ENCODE measurements at regions of chr6 and their contacts with region 1.

Region 1: GRCh38 chr6:26031595-26032339 is 55.5 kb upstream of the HFE start:
- DNase-seq: peak; percentile 99
- H3K4me3 ChIP-seq: peak overlapping the region; percentile 78
- H3K27ac ChIP-seq: peak overlapping the region; percentile 99
- H3K4me1 ChIP-seq: peaks cover 74% of the 10 kb centered on the region
- CTCF ChIP-seq: 0 out of 2 replicates have a peak, but pooled peaks have one; percentile 33

Region 2: GRCh38 chr6:25389471-25389870 is 642.3 kb before region 1 on chr6:
- CTCF ChIA-PET with region 1: no interaction called
- POLR2A ChIA-PET with region 1: interaction called, 10 read pairs
- intact Hi-C with region 1: no loop called
- DNase-seq: no peak
- H3K4me3 ChIP-seq: peak overlapping the region; percentile 60
- H3K27ac ChIP-seq: peak overlapping the region; percentile 99
- H3K4me1 ChIP-seq: peaks cover 94% of the 10 kb centered on the region
- CTCF ChIP-seq: no peak

Region 3: DNA sequence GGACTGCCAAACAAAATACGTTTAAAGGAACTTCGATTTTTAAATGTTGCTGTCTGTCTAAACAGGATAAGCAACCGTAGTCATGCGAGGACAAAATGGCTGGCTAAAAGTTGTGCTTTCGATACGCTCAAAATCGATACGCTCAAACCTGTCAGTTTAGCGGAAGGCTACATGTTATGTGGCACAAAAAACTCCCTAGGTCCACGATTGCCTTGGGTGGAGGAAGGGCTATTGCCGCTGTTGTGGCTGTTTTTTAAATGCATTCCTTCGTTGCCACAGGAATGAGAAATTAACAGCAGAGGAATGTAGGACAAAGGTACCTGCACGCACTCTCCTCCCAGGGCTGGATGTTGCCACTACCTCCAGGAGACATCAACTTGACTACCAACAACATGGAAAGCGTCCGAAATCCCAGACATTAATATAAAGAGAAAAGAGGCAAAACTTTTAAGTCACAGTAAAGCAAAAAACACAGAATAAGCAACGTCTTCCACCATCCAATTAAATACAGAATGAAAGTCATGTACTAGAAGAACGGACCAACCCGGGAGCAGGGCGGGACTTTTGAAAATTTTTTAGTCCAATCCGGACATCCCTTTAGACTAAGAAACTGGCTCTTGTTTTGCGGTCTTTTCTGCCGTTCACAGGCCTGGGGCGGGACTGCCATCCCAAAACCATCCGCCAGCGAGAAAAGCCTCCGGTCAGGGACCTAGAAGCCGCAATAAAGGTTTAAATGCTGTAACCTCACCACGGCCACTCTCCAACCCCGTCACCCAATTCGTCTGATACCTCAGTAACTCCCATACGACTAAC is 23.3 kb after region 1 on chr6:
- CTCF ChIA-PET with region 1: no interaction called
- POLR2A ChIA-PET with region 1: interaction called, 793 read pairs
- intact Hi-C with region 1: loop called (anchors 1 kb)
- DNase-seq: peak; percentile 93
- H3K4me3 ChIP-seq: peak overlapping the region; percentile 70
- H3K27ac ChIP-seq: peak overlapping the region; percentile 93
- H3K4me1 ChIP-seq: peaks cover 41% of the 10 kb centered on the region
- CTCF ChIP-seq: no peak

Region 4: DNA sequence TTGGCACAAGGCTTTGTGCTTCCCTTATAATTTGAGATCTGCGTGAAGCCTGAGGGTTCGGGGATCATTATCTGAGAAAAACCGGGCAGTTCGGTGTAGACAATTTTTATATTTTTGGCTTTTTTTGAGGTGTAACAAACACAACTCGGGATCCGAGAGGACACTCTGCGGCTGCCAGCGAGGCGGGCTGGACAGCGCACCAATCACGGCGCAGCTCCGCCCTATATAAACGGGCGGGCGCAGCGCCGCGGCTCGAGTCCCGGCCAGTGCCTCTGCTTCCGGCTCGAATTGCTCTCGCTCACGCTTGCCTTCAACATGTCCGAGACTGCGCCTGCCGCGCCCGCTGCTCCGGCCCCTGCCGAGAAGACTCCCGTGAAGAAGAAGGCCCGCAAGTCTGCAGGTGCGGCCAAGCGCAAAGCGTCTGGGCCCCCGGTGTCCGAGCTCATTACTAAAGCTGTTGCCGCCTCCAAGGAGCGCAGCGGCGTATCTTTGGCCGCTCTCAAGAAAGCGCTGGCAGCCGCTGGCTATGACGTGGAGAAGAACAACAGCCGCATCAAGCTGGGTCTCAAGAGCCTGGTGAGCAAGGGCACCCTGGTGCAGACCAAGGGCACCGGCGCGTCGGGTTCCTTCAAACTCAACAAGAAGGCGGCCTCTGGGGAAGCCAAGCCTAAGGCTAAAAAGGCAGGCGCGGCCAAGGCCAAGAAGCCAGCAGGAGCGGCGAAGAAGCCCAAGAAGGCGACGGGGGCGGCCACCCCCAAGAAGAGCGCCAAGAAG is 124.5 kb after region 1 on chr6:
- CTCF ChIA-PET with region 1: no interaction called
- POLR2A ChIA-PET with region 1: interaction called, 89 read pairs
- intact Hi-C with region 1: loop called (anchors 1 kb)
- DNase-seq: peak; percentile 88
- H3K4me3 ChIP-seq: peak overlapping the region; percentile 79
- H3K27ac ChIP-seq: peak overlapping the region; percentile 99
- H3K4me1 ChIP-seq: peaks cover 28% of the 10 kb centered on the region
- CTCF ChIP-seq: no peak

Region 5: GRCh38 chr6:27132532-27133280 is 1100.9 kb after region 1 on chr6:
- CTCF ChIA-PET with region 1: no interaction called
- POLR2A ChIA-PET with region 1: interaction called, 11 read pairs
- intact Hi-C with region 1: loop called (anchors 1 kb)
- DNase-seq: peak; percentile 98
- H3K4me3 ChIP-seq: peak overlapping the region; percentile 79
- H3K27ac ChIP-seq: peak overlapping the region; percentile 99
- H3K4me1 ChIP-seq: peaks cover 74% of the 10 kb centered on the region
- CTCF ChIP-seq: no peak

Region 6: GRCh38 chr6:27146706-27147505 is 1115.1 kb after region 1 on chr6:
- CTCF ChIA-PET with region 1: no interaction called
- POLR2A ChIA-PET with region 1: interaction called, 68 read pairs
- intact Hi-C with region 1: loop called (anchors 5 kb)
- DNase-seq: peak; percentile 98
- H3K4me3 ChIP-seq: peak overlapping the region; percentile 73
- H3K27ac ChIP-seq: peak overlapping the region; percentile 99
- H3K4me1 ChIP-seq: peaks cover 60% of the 10 kb centered on the region
- CTCF ChIP-seq: no peak

Region 7: DNA sequence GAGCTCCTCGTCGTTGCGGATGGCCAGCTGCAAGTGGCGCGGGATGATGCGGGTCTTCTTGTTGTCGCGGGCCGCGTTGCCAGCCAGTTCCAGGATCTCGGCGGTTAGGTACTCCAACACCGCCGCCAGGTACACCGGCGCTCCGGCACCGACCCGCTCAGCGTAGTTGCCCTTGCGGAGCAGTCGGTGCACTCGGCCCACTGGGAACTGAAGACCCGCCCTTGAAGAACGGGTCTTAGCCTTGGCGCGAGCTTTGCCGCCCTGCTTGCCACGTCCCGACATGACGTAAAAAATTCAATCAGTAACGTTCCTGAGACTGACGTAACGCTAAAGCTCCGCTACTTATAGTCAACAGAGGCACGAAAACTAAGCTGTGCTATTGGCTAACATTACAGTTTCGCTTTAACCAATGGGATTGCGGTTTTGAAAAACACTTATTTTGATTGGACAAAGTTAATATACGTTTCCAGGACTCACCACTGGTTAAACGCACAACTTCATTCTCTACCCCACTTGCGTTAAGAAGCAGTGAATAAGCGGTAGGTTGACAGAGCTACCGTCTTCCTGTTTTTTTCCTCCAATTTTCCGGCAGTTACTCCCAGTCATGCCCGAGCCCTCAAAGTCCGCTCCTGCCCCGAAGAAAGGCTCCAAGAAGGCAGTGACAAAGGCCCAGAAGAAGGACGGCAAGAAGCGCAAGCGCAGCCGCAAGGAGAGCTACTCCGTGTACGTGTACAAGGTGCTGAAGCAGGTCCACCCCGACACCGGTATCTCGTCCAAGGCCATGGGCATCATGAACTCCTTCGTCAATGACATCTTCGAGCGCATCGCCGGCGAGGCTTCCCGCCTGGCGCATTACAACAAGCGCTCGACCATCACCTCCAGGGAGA is 1806.5 kb after region 1 on chr6:
- CTCF ChIA-PET with region 1: interaction called, 3 read pairs
- POLR2A ChIA-PET with region 1: interaction called, 27 read pairs
- intact Hi-C with region 1: no loop called
- DNase-seq: peak; percentile 99
- H3K4me3 ChIP-seq: peak overlapping the region; percentile 87
- H3K27ac ChIP-seq: peak overlapping the region; percentile 97
- H3K4me1 ChIP-seq: peaks cover 37% of the 10 kb centered on the region
- CTCF ChIP-seq: no peak

Measured in OCI-LY7 (cell line).